AG04449 (cell line): ENCODE measurements at regions of chr2 and their contacts with region 1.

Region 1: GRCh38 chr2:219441451-219442255 is 7.0 kb downstream of the SPEG start:
- DNase-seq: no peak
- H3K4me3 ChIP-seq: peak overlapping the region; percentile 66
- CTCF ChIP-seq: no peak

Region 2: DNA sequence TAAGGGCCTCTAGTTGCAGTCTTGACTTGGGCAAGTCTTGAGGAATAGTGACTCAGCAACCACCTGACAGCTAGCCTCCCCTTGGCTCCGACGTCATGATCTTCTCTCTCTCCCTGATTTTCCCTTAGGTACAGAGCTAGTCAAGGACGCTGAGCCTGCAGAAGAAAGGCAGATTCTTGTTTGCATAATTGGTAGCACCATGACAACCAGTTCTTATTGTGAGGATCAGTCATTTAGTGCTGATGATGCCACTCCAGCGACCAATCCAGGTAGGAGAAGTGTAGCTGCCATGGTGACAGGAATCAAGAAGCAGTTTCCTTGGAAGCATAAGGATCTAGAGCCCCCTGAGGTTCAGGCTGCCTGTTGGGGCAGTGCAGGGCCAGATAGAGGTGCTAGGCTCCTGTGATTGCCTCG is 106.3 kb before region 1 on chr2:
- CTCF ChIA-PET with region 1: no interaction called
- POLR2A ChIA-PET with region 1: no interaction called
- DNase-seq: no peak
- H3K4me3 ChIP-seq: no peak overlapping the region
- CTCF ChIP-seq: no peak

Region 3: GRCh38 chr2:219430633-219431615 is 10.7 kb before region 1 on chr2:
- CTCF ChIA-PET with region 1: interaction called, 14 read pairs
- POLR2A ChIA-PET with region 1: interaction called, 5 read pairs
- DNase-seq: no peak
- H3K4me3 ChIP-seq: no peak overlapping the region
- CTCF ChIP-seq: peak; percentile 48

Region 4: DNA sequence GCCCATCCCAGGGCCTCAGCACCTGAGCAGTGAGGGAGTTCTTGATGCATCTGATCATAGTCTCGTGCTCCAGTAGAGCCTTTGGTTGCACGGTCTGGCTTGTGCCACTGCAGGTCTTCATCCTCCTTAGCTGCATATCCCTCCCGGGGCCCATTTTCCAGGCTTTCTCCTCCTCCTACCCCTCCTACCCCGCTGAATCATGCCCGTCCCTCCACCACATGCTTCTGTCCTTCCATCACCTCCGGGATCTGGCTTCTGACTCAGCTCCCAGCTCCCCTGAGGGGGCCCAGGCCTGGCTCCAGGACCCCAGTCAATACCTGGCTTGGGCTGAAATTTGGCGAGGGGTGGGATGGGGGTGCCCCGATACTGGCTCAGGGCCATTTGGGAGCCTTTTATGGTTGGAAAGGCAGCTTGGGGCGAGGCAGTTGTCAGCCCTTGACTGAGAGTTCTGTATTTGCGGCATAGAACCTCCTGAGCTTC is 11.2 kb after region 1 on chr2:
- CTCF ChIA-PET with region 1: interaction called, 21 read pairs
- POLR2A ChIA-PET with region 1: interaction called, 24 read pairs
- DNase-seq: peak; percentile 87
- H3K4me3 ChIP-seq: no peak overlapping the region
- CTCF ChIP-seq: no peak

Region 5: GRCh38 chr2:219459460-219460311 is 18.0 kb after region 1 on chr2:
- CTCF ChIA-PET with region 1: interaction called, 21 read pairs
- POLR2A ChIA-PET with region 1: interaction called, 5 read pairs
- DNase-seq: no peak
- H3K4me3 ChIP-seq: no peak overlapping the region
- CTCF ChIP-seq: peak; percentile 96

Region 6: DNA sequence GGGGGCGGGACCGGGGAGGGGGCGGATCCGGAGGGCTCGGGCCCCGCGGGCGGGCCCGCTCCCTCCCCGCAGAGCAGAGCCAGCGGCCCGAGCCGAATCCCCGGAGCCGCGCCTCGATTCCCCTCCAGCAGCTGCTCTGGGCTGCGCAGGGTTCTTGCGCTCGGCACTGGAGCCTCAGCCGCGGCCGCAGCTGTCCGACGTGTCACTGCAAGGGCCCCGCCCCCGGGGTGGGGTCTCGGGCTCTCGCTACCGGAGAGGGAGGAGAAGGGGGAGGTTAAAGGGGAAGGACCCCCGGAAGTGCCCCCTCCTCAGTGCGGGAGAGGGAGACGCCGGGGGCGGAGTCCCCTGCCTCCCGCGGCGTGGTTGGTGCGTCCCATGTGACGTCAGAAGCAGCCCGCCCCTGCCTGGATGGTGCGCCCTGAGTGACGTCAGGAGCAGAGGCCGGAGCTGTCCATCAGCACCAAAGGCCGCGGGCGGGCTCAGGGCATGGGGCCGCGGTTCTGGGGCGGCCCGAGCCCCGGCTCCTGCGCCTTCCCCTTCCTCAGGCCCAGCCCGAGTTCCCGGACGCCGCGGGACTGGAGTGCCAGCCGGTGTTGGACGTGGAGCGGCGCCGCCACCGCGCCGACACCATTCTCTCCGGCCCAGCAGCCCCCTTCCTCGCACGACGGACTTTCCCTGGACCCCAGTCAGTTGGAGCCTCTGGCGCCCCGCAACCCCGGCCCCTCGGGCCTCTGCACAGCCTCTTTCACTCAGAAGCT is 102.1 kb after region 1 on chr2 and contains the starts of genes CHPF and TMEM198:
- CTCF ChIA-PET with region 1: no interaction called
- POLR2A ChIA-PET with region 1: no interaction called
- DNase-seq: peak; percentile 87
- H3K4me3 ChIP-seq: peak within 1 kb of the TSS; percentile 80
- CTCF ChIP-seq: no peak

Region 7: GRCh38 chr2:219664944-219665343 is 223.3 kb after region 1 on chr2:
- CTCF ChIA-PET with region 1: no interaction called
- POLR2A ChIA-PET with region 1: no interaction called
- DNase-seq: no peak
- H3K4me3 ChIP-seq: no peak overlapping the region
- CTCF ChIP-seq: no peak